ENCODE measurements at regions of chr1 and their contacts with region 1.

Region 1: GRCh38 chr1:212455803-212456528 is 23.2 kb downstream of the NENF start:
- DNase-seq: peak; percentile 89
- H3K4me3 Mint-ChIP-seq: no peak overlapping the region
- H3K27ac Mint-ChIP-seq: no peak overlapping the region
- H3K4me1 Mint-ChIP-seq: peaks cover 12% of the 10 kb centered on the region
- H3K27me3 Mint-ChIP-seq: peaks cover 11% of the 10 kb centered on the region

Region 2: GRCh38 chr1:211698161-211699026 is 757.6 kb before region 1 on chr1:
- CTCF ChIA-PET with region 1: interaction called, 29 read pairs
- DNase-seq: peak; percentile 89
- H3K4me3 Mint-ChIP-seq: no peak overlapping the region
- H3K27ac Mint-ChIP-seq: no peak overlapping the region
- H3K4me1 Mint-ChIP-seq: peaks cover 43% of the 10 kb centered on the region
- H3K27me3 Mint-ChIP-seq: peaks cover 44% of the 10 kb centered on the region

Region 3: GRCh38 chr1:212062832-212063438 is 393.0 kb before region 1 on chr1:
- CTCF ChIA-PET with region 1: interaction called, 46 read pairs
- DNase-seq: no peak
- H3K4me3 Mint-ChIP-seq: no peak overlapping the region
- H3K27ac Mint-ChIP-seq: no peak overlapping the region
- H3K4me1 Mint-ChIP-seq: no peaks in the 10 kb centered on the region
- H3K27me3 Mint-ChIP-seq: no peaks in the 10 kb centered on the region

Region 4: DNA sequence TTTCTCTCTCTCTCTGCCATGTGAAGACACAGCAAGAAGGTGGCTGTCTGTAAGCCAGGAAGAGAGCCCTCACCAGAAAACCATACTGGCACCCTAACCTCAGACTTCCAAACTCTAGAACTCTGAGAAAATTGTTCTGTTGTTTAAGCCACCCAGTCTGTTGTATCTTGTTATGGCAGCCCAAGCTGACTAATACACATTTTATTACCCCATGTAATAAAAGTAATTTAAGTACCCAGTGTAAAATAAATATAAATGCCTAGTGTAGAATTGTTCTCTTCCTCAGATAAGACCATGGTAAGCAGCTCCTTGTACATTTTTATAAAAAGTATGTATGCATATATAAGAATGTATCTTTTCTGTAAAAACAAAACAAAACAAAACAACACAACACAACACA is 300.7 kb before region 1 on chr1:
- CTCF ChIA-PET with region 1: no interaction called
- DNase-seq: no peak
- H3K4me3 Mint-ChIP-seq: no peak overlapping the region
- H3K27ac Mint-ChIP-seq: no peak overlapping the region
- H3K4me1 Mint-ChIP-seq: peaks cover 17% of the 10 kb centered on the region
- H3K27me3 Mint-ChIP-seq: peaks cover 8% of the 10 kb centered on the region

Region 5: GRCh38 chr1:212368073-212368484 is 87.9 kb before region 1 on chr1:
- CTCF ChIA-PET with region 1: interaction called, 29 read pairs
- DNase-seq: peak; percentile 71
- H3K4me3 Mint-ChIP-seq: no peak overlapping the region
- H3K27ac Mint-ChIP-seq: no peak overlapping the region
- H3K4me1 Mint-ChIP-seq: no peaks in the 10 kb centered on the region
- H3K27me3 Mint-ChIP-seq: no peaks in the 10 kb centered on the region

Region 6: GRCh38 chr1:212469701-212470458 is 13.9 kb after region 1 on chr1:
- CTCF ChIA-PET with region 1: interaction called, 18 read pairs
- DNase-seq: no peak
- H3K4me3 Mint-ChIP-seq: no peak overlapping the region
- H3K27ac Mint-ChIP-seq: no peak overlapping the region
- H3K4me1 Mint-ChIP-seq: peaks cover 10% of the 10 kb centered on the region
- H3K27me3 Mint-ChIP-seq: peaks cover 30% of the 10 kb centered on the region

Region 7: DNA sequence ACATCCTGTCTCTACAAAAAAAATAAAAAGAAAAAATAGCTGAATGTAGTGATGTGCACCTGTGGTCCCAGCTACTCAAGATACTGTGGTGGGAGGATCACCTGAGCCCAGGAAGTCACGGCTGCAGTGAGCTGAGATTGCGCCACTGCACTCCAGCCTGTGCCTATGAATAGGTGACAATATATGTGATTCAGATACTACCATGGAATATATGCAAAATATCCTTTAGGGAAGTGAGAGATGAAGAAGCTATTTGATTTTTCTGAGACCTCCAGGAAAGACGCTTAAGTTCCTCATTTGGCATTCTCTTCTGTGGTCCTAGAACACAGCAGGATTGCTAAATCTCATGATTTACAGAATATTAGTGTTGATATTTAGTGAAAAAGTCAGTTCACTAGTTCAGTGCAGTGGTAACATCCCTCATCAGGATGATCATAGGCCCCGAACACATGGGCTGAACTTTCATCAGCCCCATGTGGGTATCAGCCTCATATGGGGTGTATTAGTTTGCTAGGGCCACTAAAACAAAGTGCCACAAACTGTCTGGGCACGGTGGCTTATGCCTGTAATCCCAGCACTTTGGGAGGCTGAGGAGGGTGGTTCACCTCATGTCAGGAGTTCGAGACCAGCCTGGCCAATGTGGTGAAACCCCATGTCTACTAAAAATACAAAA is 488.4 kb after region 1 on chr1:
- CTCF ChIA-PET with region 1: no interaction called
- DNase-seq: no peak
- H3K4me3 Mint-ChIP-seq: no peak overlapping the region
- H3K27ac Mint-ChIP-seq: no peak overlapping the region
- H3K4me1 Mint-ChIP-seq: no peaks in the 10 kb centered on the region
- H3K27me3 Mint-ChIP-seq: peaks cover 23% of the 10 kb centered on the region

Region 8: DNA sequence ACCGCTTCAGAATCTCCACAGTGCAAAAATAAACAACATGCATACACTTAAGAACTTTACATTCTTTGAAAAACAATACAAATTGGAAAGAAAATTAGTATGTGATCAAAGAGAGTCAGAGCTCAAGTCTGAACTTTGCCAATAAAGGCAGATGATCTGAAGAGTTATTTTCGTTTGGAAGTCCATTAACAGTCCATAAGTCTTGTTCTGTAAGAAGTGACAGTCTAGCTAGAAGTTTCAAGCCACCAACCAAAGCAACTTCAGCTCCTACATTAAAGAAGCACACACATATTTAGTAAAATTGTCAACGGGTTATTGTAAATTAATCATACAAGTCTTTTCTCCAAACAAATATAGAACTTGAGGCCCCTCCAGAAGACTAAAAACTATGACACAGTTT is 539.0 kb after region 1 on chr1:
- CTCF ChIA-PET with region 1: interaction called, 12 read pairs
- DNase-seq: no peak
- H3K4me3 Mint-ChIP-seq: no peak overlapping the region
- H3K27ac Mint-ChIP-seq: no peak overlapping the region
- H3K4me1 Mint-ChIP-seq: peaks cover 1% of the 10 kb centered on the region
- H3K27me3 Mint-ChIP-seq: no peaks in the 10 kb centered on the region